ENCODE measurements at regions of chr3 and their contacts with region 1.

Region 1: DNA sequence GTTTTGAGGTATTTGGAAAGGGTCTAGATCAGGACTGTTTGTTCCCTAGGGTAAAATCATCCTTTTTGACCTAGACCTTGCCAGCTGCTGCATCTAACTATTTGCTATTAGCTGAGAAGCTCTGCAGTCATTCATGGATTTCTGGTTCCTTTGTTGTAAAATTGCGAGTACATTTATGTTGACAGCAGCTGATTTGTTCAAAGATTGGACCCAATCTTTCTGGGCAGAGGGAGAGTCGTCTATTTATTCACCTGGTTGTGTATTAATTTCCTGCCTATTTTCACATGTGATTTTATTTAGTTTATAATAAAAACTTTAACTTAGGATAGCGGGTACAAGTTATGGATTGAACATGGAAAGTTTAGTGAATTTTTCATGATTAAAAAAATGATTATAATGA is 236.3 kb downstream of the CNTN4 start:
- DNase-seq: no peak
- H3K4me3 ChIP-seq: no peak overlapping the region
- H3K27ac ChIP-seq: no peak overlapping the region
- H3K4me1 ChIP-seq: no peaks in the 10 kb centered on the region
- H3K27me3 ChIP-seq: no peaks in the 10 kb centered on the region
- CTCF ChIP-seq: no peak
- POLR2A ChIP-seq: no peak

Region 2: GRCh38 chr3:1330107-1330506 is 1004.8 kb before region 1 on chr3:
- intact Hi-C with region 1: loop called (anchors 5 kb)
- DNase-seq: no peak
- H3K4me3 ChIP-seq: no peak overlapping the region
- H3K27ac ChIP-seq: no peak overlapping the region
- H3K4me1 ChIP-seq: no peaks in the 10 kb centered on the region
- H3K27me3 ChIP-seq: no peaks in the 10 kb centered on the region
- CTCF ChIP-seq: no peak
- POLR2A ChIP-seq: no peak

Region 3: GRCh38 chr3:1348547-1348946 is 986.4 kb before region 1 on chr3:
- intact Hi-C with region 1: no loop called
- DNase-seq: no peak
- H3K4me3 ChIP-seq: no peak overlapping the region
- H3K27ac ChIP-seq: no peak overlapping the region
- H3K4me1 ChIP-seq: no peaks in the 10 kb centered on the region
- H3K27me3 ChIP-seq: no peaks in the 10 kb centered on the region
- CTCF ChIP-seq: no peak
- POLR2A ChIP-seq: no peak

Region 4: GRCh38 chr3:1962396-1963088 is 372.4 kb before region 1 on chr3:
- intact Hi-C with region 1: loop called (anchors 5 kb)
- DNase-seq: no peak
- H3K4me3 ChIP-seq: no peak overlapping the region
- H3K27ac ChIP-seq: no peak overlapping the region
- H3K4me1 ChIP-seq: no peaks in the 10 kb centered on the region
- H3K27me3 ChIP-seq: no peaks in the 10 kb centered on the region
- CTCF ChIP-seq: no peak
- POLR2A ChIP-seq: no peak

Region 5: DNA sequence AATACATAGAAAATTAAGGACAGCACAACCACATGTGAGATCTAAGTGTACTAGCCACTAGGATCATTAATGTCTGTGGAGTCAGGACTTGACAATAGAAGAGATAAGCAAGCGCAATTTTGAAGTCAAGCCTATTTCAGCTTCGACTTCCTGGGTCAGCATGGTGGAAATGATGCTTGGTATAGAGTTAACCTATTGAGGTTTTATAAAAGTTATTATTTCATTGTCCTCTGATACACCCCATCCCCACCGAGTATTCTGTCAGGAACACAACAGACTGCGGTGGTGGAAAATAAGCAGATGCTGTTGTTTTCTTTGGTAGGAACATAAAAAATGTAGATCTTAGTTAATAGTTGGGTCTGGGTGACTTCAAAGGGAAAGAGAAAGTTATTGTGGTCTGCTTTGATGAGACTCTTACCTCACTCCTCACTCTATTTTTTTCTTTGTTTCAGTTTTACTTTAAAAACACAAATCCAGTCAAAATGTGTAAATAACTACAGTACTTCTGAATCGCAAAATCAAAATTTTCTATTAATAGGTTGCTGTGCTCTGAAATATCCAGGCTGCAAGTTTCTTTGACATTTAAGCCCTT is 693.2 kb after region 1 on chr3:
- intact Hi-C with region 1: no loop called
- DNase-seq: no peak
- H3K4me3 ChIP-seq: no peak overlapping the region
- H3K27ac ChIP-seq: no peak overlapping the region
- H3K4me1 ChIP-seq: no peaks in the 10 kb centered on the region
- H3K27me3 ChIP-seq: no peaks in the 10 kb centered on the region
- CTCF ChIP-seq: no peak
- POLR2A ChIP-seq: no peak

Measured in breast epithelium (tissue), 4 donors.